ENCODE measurements at regions of chr2 and their contacts with region 1.

Region 1: GRCh38 chr2:26605195-26605998 is 35.8 kb downstream of the CIB4 start:
- DNase-seq: peak; percentile 52
- H3K4me3 ChIP-seq: no peak overlapping the region
- H3K27ac ChIP-seq: no peak overlapping the region
- H3K4me1 ChIP-seq: no peaks in the 10 kb centered on the region
- H3K27me3 ChIP-seq: peaks cover 9 to 15% of the 10 kb centered on the region in 2 experiments
- CTCF ChIP-seq: peak; percentile 73 to 77
- POLR2A ChIP-seq: no peak

Region 2: DNA sequence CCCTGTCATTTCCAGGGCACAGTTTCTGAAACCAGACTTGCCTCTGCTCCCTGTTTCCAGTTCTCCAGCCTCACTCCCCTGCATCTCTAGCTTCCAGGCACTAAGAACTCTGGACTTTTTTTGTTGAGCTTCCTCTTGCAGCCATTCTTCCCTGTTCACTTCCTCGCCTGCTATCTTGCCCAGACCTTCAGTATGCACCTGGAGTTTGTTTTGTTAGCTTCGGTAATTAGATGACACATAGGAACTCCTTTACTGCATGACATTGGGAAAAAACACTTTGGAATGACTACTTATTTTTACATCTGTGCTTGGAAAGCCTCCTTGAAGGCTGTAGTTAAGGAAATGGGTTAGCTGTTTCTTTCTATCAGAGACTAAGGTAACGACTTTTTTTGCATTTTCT is 162.7 kb before region 1 on chr2:
- CTCF ChIA-PET with region 1: no interaction called
- POLR2A ChIA-PET with region 1: no interaction called
- dilution Hi-C with region 1: no loop called
- intact Hi-C with region 1: no loop called
- DNase-seq: peak; percentile 22
- H3K4me3 ChIP-seq: no peak overlapping the region
- H3K27ac ChIP-seq: no peak overlapping the region
- H3K4me1 ChIP-seq: no peaks in the 10 kb centered on the region
- H3K27me3 ChIP-seq: peaks cover 0 to 10% of the 10 kb centered on the region in 2 experiments
- CTCF ChIP-seq: no peak
- POLR2A ChIP-seq: no peak

Region 3: DNA sequence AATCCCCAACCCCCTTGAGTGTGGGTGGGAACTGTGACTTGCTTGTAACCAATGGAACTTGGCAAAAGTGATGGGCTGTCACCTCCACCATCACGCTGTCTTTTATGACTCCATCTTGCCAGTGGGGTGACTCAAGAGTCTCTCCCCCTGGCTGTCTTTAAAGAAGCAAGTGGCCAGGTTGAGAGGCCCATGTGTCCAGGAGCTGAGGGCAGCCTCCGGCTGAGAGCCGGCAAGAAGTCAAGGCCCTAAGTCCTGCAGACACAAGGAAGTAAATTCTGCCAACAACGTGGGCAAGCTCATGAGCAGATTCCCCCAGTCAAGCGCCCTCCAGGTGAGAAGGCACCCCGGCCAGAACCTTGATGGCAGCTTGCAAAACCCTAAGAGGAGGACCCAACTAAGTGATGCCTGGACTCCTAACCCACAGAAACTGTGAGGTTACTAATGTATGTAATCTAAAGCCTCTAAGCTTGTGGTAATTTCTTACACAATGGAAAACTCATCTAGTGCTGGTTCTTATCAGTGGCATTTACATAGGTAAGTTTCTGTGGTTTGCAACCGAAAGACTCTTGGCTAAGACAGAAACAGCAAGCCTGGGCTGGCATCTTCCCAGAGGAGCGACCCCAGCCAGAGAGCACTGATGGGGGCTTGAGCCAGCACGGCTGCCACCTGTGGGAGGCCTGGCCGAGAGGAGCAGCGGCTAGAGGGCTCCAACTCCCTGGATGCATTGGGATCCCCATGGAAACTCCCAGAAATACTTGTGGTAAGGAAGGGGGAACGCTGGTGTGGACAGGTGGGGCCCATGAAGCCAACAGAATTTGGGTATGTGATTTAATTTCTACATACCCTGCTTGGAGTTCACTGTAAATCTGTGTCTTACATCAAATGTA is 13.5 kb before region 1 on chr2:
- CTCF ChIA-PET with region 1: interaction called, 21 read pairs
- POLR2A ChIA-PET with region 1: no interaction called
- dilution Hi-C with region 1: no loop called
- intact Hi-C with region 1: no loop called
- DNase-seq: no peak
- H3K4me3 ChIP-seq: no peak overlapping the region
- H3K27ac ChIP-seq: no peak overlapping the region
- H3K4me1 ChIP-seq: peaks cover 6% of the 10 kb centered on the region
- H3K27me3 ChIP-seq: peaks cover 22 to 28% of the 10 kb centered on the region in 2 experiments
- CTCF ChIP-seq: no peak
- POLR2A ChIP-seq: no peak

Region 4: GRCh38 chr2:26621469-26622199 is 16.2 kb after region 1 on chr2:
- CTCF ChIA-PET with region 1: interaction called, 10 read pairs
- POLR2A ChIA-PET with region 1: no interaction called
- dilution Hi-C with region 1: no loop called
- intact Hi-C with region 1: no loop called
- DNase-seq: no peak
- H3K4me3 ChIP-seq: no peak overlapping the region
- H3K27ac ChIP-seq: no peak overlapping the region
- H3K4me1 ChIP-seq: no peaks in the 10 kb centered on the region
- H3K27me3 ChIP-seq: peaks cover 12 to 22% of the 10 kb centered on the region in 2 experiments
- CTCF ChIP-seq: no peak
- POLR2A ChIP-seq: no peak

Region 5: GRCh38 chr2:26727641-26728561 is 122.5 kb after region 1 on chr2:
- CTCF ChIA-PET with region 1: interaction called, 12 read pairs
- POLR2A ChIA-PET with region 1: no interaction called
- dilution Hi-C with region 1: no loop called
- intact Hi-C with region 1: no loop called
- DNase-seq: no peak
- H3K4me3 ChIP-seq: no peak overlapping the region
- H3K27ac ChIP-seq: no peak overlapping the region
- H3K4me1 ChIP-seq: peaks cover 4% of the 10 kb centered on the region
- H3K27me3 ChIP-seq: peaks cover 0 to 8% of the 10 kb centered on the region in 2 experiments
- CTCF ChIP-seq: peak in 1 of 2 donors; percentile 59
- POLR2A ChIP-seq: no peak

Measured in endothelial cell of umbilical vein (primary cell).